ENCODE measurements at regions of chr1 and their contacts with region 1.

Region 1: DNA sequence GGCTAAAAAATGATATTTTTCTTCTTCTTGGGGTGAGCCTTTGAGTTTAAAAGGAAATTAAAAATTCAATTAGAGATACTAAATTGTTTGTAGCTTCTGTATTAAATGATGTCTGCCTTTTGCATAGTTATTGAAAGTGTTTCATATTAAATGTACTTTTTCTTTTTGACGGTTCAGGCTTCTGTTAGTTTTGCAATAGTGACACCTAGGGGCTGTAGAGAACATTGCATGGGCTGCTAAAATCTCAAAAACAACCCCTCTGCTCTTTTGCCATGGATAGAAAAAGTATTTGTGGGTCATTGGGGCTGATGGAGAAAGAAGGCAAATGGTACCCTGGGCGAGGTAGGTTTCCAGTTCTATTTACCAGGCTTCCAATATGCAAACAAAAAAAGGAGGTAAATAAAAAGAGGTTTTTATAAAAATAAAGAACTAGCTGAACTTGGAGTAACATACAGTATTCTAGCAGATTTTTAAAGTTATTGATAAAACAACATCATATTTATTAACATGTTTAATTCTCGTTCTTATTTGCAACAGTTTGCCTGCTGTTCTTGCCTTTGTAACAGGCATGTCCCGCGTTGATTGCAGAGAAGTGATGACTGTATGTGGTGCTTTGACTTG is 115.4 kb upstream of the HOOK1 start:
- DNase-seq: peak; percentile 12
- ATAC-seq: peak; percentile 33
- H3K4me3 Mint-ChIP-seq: no peak overlapping the region
- H3K27ac Mint-ChIP-seq: no peak overlapping the region
- H3K4me1 Mint-ChIP-seq: peaks cover 21% of the 10 kb centered on the region
- H3K27me3 Mint-ChIP-seq: no peaks in the 10 kb centered on the region

Region 2: GRCh38 chr1:58857680-58858673 is 841.4 kb before region 1 on chr1:
- CTCF ChIA-PET with region 1: interaction called, 3 read pairs
- POLR2A ChIA-PET with region 1: no interaction called
- intact Hi-C with region 1: loop called in 1 of 2 experiments (anchors 5 kb)
- DNase-seq: peak; percentile 44
- ATAC-seq: peak; percentile 75
- H3K4me3 Mint-ChIP-seq: no peak overlapping the region
- H3K27ac Mint-ChIP-seq: peak overlapping the region; percentile 80
- H3K4me1 Mint-ChIP-seq: peaks cover 38% of the 10 kb centered on the region
- H3K27me3 Mint-ChIP-seq: no peaks in the 10 kb centered on the region

Region 3: DNA sequence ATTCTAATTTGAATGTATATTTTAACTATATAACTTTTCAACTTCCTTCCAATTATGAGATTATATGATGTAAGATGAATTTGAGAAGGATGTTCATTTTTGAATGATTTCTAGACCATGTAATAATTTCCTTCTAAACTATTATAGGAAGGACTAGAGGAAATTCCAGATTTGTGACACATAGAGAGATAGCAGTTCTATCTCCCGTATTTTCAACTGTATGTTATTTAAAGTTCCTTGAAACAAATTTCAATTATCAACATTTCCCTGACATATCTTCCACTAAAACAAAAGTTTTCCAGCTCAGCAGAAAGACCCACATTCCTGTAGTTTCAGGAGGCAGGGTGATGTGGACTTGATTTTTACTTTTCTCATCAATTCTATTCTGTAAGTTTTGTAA is 770.9 kb after region 1 on chr1:
- CTCF ChIA-PET with region 1: no interaction called
- POLR2A ChIA-PET with region 1: no interaction called
- intact Hi-C with region 1: no loop called
- DNase-seq: no peak
- ATAC-seq: no peak
- H3K4me3 Mint-ChIP-seq: no peak overlapping the region
- H3K27ac Mint-ChIP-seq: no peak overlapping the region
- H3K4me1 Mint-ChIP-seq: no peaks in the 10 kb centered on the region
- H3K27me3 Mint-ChIP-seq: no peaks in the 10 kb centered on the region